ENCODE measurements at regions of chr18 and their contacts with region 1.

Region 1: DNA sequence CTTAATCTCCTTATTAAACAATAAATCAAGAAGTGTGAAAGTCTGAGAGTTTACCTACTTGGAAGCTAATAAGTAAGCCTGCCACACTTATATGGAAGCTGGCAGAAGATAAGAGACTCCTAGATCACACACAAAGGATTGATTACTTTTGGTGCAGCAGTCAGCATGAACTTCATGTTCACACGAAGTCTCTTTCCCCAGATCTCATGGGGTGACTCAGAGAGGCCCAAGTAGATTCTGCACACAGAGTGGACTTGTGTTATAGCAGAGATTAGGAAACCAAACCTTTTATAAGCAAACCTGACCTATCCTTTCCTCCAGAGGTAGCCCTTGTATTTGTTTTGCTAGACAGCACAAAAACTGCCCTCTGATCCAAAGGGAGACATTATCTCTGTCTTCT is 9.9 kb upstream of the GAREM1 start:
- DNase-seq: no peak
- H3K4me3 ChIP-seq: no peak overlapping the region
- H3K27ac ChIP-seq: no peak overlapping the region
- H3K4me1 ChIP-seq: no peaks in the 10 kb centered on the region
- H3K27me3 ChIP-seq: no peaks in the 10 kb centered on the region
- CTCF ChIP-seq: no peak
- EP300 ChIP-seq: no peak
- POLR2A ChIP-seq: no peak

Region 2: GRCh38 chr18:32261003-32261402 is 219.6 kb before region 1 on chr18:
- intact Hi-C with region 1: loop called in 1 of 4 experiments (anchors 10 kb)
- DNase-seq: no peak
- H3K4me3 ChIP-seq: no peak overlapping the region
- H3K27ac ChIP-seq: no peak overlapping the region
- H3K4me1 ChIP-seq: no peaks in the 10 kb centered on the region
- H3K27me3 ChIP-seq: no peaks in the 10 kb centered on the region
- CTCF ChIP-seq: no peak
- EP300 ChIP-seq: no peak
- POLR2A ChIP-seq: no peak

Region 3: DNA sequence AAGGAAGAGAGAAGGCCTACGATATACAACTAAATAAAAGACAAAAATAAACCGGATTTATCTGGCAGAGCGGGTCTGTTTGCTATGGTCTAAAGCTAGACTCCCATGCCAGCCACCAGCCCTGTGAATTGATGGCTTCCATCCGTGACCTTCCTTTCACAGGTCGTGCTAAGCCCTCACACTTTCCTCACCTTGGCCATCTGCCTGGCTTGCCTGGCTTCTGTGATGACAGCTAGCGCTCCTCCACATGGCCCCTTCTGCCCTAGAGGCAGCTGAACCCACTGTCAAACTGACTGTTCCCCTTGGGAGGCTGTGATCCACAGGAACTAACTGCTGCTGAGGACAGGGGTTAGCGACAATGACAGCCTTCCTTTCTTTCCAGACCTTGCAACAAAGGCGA is 42.4 kb before region 1 on chr18:
- intact Hi-C with region 1: no loop called
- DNase-seq: peak in 4 of 5 donors; percentile 12 to 38 (median 18)
- H3K4me3 ChIP-seq: no peak overlapping the region
- H3K27ac ChIP-seq: no peak overlapping the region
- H3K4me1 ChIP-seq: peaks cover 2% of the 10 kb centered on the region
- H3K27me3 ChIP-seq: no peaks in the 10 kb centered on the region
- CTCF ChIP-seq: no peak
- EP300 ChIP-seq: no peak
- POLR2A ChIP-seq: no peak

Measured in ovary (tissue), 10 donors.